ENCODE measurements at regions of chr6 and their contacts with region 1.

Region 1: DNA sequence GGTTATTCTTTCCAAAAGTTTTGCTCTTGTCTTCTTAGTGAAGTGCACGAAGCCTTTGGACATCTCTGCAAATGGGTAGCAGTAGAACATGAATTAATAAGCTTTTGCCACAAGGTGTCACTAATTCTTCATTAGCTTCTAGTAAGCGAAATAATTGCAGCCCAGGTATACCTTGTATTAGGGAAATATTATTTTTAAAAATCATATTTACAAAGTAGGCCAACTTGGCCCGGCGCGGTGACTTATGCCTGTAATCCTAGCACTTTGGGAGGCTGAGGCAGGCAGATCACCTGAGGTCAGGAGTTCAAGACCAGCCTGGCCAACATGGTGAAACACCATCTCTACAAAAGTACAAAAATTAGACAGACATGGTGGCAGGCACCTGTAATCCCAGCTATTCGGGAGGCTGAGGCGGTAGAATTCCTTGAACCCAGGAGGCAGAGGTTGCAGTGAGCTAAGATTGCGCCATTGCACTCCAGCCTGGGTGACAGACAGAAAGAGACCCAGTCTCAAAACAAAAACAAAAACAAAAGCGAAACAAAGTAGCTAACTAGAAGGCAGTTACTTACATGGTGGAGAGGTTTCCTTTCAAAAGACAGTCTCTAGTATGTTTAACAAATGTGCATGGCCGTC is 8.8 kb upstream of the RSPH3 start:
- DNase-seq: peak; percentile 25
- H3K4me3 Mint-ChIP-seq: no peak overlapping the region
- H3K27ac Mint-ChIP-seq: no peak overlapping the region
- H3K4me1 Mint-ChIP-seq: peaks cover 23% of the 10 kb centered on the region
- H3K27me3 Mint-ChIP-seq: no peaks in the 10 kb centered on the region

Region 2: GRCh38 chr6:158926416-158926815 is 82.4 kb before region 1 on chr6:
- CTCF ChIA-PET with region 1: no interaction called
- DNase-seq: no peak
- H3K4me3 Mint-ChIP-seq: no peak overlapping the region
- H3K27ac Mint-ChIP-seq: no peak overlapping the region
- H3K4me1 Mint-ChIP-seq: no peaks in the 10 kb centered on the region
- H3K27me3 Mint-ChIP-seq: no peaks in the 10 kb centered on the region

Region 3: GRCh38 chr6:159042003-159042825 is 33.4 kb after region 1 on chr6:
- CTCF ChIA-PET with region 1: interaction called, 28 read pairs
- DNase-seq: peak; percentile 83
- H3K4me3 Mint-ChIP-seq: peak overlapping the region; percentile 96
- H3K27ac Mint-ChIP-seq: peak overlapping the region; percentile 98
- H3K4me1 Mint-ChIP-seq: peaks cover 66% of the 10 kb centered on the region
- H3K27me3 Mint-ChIP-seq: no peaks in the 10 kb centered on the region

Region 4: GRCh38 chr6:159095616-159096015 is 86.8 kb after region 1 on chr6:
- CTCF ChIA-PET with region 1: interaction called, 10 read pairs
- DNase-seq: no peak
- H3K4me3 Mint-ChIP-seq: no peak overlapping the region
- H3K27ac Mint-ChIP-seq: peak overlapping the region; percentile 92
- H3K4me1 Mint-ChIP-seq: peaks cover 69% of the 10 kb centered on the region
- H3K27me3 Mint-ChIP-seq: no peaks in the 10 kb centered on the region

Region 5: DNA sequence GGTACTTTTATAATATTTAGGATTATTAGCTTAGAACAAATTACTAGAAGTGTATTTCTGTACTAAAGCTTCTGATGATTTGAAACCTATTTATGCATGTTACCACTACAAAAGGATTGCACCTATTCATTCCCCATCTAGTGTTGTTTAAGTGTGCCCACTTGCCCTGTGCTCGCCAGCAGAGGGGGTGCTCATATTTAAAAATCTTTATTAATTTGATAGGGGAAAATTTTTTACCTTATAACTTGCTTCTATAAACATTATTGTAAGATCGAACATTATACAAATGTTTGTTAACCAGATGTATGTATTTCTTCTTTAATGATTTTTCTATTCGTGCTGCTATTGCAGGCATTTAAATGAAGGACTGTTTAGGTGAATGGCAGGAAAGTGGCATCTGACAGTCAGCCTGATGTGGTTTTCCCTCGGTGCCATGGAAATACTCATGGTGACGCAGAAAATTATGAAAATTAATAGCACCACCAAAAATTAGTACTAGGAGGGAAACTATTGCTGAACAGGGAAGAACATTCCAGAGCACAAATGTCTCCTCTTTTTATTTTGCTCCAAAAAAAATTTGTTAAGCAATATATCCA is 116.3 kb after region 1 on chr6:
- CTCF ChIA-PET with region 1: interaction called, 186 read pairs
- DNase-seq: no peak
- H3K4me3 Mint-ChIP-seq: no peak overlapping the region
- H3K27ac Mint-ChIP-seq: no peak overlapping the region
- H3K4me1 Mint-ChIP-seq: no peaks in the 10 kb centered on the region
- H3K27me3 Mint-ChIP-seq: peaks cover 41% of the 10 kb centered on the region